ENCODE measurements at regions of chr18 and their contacts with region 1.

Region 1: GRCh38 chr18:11733031-11733430 is 44.0 kb downstream of the GNAL start:
- H3K4me3 Mint-ChIP-seq: peak overlapping the region; percentile 61
- H3K27ac Mint-ChIP-seq: no peak overlapping the region
- H3K4me1 Mint-ChIP-seq: no peaks in the 10 kb centered on the region
- H3K27me3 Mint-ChIP-seq: peaks cover 45% of the 10 kb centered on the region

Region 2: GRCh38 chr18:11577271-11578112 is 155.5 kb before region 1 on chr18:
- intact Hi-C with region 1: no loop called
- H3K4me3 Mint-ChIP-seq: no peak overlapping the region
- H3K27ac Mint-ChIP-seq: no peak overlapping the region
- H3K4me1 Mint-ChIP-seq: no peaks in the 10 kb centered on the region
- H3K27me3 Mint-ChIP-seq: no peaks in the 10 kb centered on the region

Region 3: DNA sequence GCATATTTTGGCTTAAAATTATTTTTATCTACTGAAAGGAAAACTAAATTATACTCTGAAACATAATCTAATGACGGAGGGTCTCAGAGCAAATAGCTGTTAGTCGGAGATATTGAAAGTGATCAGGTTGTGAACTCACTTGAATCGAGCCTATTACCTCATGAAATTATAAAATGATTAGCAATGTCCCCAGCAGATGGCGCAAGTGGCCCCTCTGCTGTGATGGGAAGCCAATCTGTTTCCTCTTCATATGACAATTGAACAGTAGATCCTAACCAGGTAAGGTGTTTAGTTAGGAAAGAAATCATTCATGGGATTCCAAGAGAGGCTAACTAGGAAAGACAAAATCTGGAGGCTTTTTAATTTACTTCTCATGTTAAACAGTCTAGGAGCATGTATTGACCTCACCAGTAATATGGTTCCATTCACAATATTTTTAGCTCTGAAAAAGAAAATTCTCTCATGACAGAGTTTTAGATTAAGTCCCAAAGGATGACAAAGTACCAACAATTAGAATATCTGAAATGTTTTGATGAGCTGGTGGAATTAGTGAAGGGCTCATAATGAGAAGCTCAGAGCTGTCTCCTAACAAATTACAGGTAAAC is 204.9 kb after region 1 on chr18:
- intact Hi-C with region 1: loop called (anchors 2 kb)
- H3K4me3 Mint-ChIP-seq: no peak overlapping the region
- H3K27ac Mint-ChIP-seq: no peak overlapping the region
- H3K4me1 Mint-ChIP-seq: peaks cover 16% of the 10 kb centered on the region
- H3K27me3 Mint-ChIP-seq: no peaks in the 10 kb centered on the region

Region 4: DNA sequence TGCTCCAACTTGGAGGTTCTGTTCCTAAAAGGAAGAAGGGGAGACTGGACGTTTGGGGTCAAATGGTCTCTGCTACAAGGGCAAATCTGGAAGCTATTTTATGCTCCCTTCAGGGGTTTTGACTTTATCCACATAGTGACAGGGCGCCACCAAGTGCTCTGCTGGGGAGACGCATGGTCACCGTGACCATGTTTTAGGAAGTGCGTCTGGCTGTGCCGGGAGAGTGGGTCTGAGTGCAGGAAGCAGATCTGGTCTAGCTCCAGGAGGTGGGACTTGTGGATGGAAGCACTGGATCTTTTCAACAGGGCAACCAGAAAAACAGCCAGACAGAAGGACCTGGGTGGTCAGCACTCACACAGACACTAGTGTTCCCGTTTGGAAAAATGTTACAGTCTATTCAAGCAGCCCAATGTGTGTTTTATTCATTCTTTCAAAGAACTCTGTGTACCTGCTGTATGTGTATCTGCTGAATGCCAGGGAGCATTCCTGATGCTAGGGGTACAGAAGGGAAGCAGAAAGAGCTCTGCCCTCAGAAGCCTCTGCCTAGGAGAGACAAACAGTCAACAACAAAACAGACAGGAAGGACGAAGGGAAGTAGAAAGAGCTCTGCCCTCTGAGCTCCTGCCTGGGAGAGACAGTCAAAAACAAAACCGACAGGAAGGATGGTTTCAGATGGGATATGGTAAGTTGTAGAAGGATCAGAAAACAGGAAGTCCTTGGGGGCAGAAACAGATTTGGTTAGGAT is 262.6 kb after region 1 on chr18:
- intact Hi-C with region 1: loop called (anchors 1 kb)
- H3K4me3 Mint-ChIP-seq: no peak overlapping the region
- H3K27ac Mint-ChIP-seq: peak overlapping the region; percentile 61
- H3K4me1 Mint-ChIP-seq: peaks cover 50% of the 10 kb centered on the region
- H3K27me3 Mint-ChIP-seq: no peaks in the 10 kb centered on the region

Region 5: DNA sequence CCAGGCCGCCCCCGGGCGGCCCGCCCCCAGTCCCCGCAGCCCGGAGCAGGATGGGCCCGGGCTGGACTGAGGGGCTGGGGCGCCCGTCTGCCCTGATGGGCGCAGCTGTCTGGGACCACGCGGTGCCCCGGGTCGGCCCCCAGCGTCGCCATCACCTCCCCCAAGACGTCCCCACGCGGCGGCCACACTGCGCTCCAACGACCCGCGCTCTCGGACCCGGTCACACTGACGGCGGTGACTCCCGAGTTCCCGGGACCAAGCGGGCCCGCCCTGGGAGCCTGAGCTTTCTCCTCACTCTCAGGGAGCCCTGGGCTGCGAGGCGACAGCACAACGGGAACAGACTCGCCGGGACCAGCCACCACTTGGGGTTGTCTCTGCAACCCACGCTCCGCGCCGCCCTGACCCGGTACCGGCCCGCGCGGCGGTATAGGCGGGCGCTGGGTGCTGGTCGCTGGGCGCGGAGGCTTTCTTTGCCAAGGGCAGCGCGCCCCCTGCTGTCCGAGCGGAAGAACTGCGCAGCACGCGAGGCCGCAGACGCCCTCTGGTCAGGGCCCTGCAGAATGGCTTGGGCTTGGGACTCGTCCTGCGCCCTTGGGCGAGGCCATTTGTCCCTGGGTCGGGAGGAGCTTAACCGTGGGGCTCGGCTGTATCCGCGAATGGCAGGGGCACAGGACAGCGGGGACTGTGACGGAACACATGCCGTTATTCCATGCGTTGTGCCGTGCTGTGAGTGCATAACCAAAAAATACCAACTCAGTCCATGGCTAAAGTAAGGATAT is 305.8 kb after region 1 on chr18:
- intact Hi-C with region 1: loop called (anchors 1 kb)
- H3K4me3 Mint-ChIP-seq: peak overlapping the region; percentile 85
- H3K27ac Mint-ChIP-seq: peak overlapping the region; percentile 82
- H3K4me1 Mint-ChIP-seq: peaks cover 50% of the 10 kb centered on the region
- H3K27me3 Mint-ChIP-seq: peaks cover 17% of the 10 kb centered on the region

Measured in dendritic cell treated with granulocyte-macrophage colony-stimulating factor and Interleukin-4, amounts not matched to agents 40 ng/mL and 50 ng/mL, for 4 days (primary cell).